B cell (primary cell): ENCODE measurements at regions of chr4 and their contacts with region 1.

Region 1: DNA sequence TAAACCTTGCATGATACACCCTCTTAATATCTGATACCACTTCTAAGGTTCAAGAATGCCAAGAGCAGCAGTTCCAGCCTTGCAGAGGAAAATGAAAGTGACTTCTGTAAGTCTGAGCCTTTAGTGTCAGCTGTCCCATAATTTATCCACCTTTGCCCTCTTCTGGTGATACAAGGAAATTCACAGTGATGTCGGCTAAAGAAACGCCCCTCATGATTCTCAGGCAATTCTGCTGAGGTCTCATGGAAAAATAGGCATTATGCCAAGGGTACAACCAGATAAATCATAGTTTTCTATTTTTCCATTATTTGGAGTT is 172.2 kb upstream of the CXCL13 start:
- DNase-seq: peak; percentile 52
- ATAC-seq: peak; percentile 45
- H3K4me3 ChIP-seq: no peak overlapping the region
- H3K4me3 Mint-ChIP-seq: no peak overlapping the region
- H3K27ac ChIP-seq: no peak overlapping the region
- H3K27ac Mint-ChIP-seq: no peak overlapping the region
- H3K4me1 ChIP-seq: peaks cover 0 to 3% of the 10 kb centered on the region in 2 donors
- H3K4me1 Mint-ChIP-seq: peaks cover 6% of the 10 kb centered on the region
- H3K27me3 ChIP-seq: no peaks in the 10 kb centered on the region
- H3K27me3 Mint-ChIP-seq: no peaks in the 10 kb centered on the region
- CTCF ChIP-seq: peak; percentile 50

Region 2: DNA sequence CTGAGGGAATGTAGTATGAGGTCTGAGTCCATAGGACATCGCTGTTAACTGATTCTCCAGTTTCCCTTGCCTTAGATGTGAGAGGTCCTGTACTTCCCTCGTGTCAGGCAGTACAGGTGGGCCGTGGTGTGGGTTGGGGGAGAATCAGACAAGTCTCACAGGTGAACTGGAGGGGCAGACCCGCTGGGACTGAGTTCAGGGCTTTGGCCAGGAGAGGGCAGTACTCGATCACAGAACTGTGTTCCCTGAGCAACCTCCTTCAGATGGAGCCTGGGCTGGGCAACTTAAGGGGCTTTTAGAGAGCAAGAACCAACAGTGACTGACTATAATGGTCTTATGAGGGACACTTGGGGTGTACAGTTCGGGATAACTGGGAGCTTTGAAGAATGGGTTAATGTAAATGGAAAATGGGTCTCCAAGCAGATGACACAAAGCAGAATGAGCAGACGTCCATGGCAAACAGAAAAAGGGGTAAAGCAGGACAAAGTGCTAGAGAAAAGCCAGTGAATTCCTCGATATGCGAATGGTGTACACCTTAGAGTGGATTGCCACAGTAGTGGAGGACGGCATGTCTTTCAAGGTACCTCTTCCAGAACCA is 192.8 kb before region 1 on chr4:
- CTCF ChIA-PET with region 1: interaction called, 5 read pairs
- POLR2A ChIA-PET with region 1: no interaction called
- intact Hi-C with region 1: loop called (anchors 2 kb)
- DNase-seq: peak; percentile 56
- ATAC-seq: peak; percentile 70
- H3K4me3 ChIP-seq: no peak overlapping the region
- H3K4me3 Mint-ChIP-seq: no peak overlapping the region
- H3K27ac ChIP-seq: no peak overlapping the region
- H3K27ac Mint-ChIP-seq: no peak overlapping the region
- H3K4me1 ChIP-seq: no peaks in the 10 kb centered on the region
- H3K4me1 Mint-ChIP-seq: no peaks in the 10 kb centered on the region
- H3K27me3 ChIP-seq: no peaks in the 10 kb centered on the region
- H3K27me3 Mint-ChIP-seq: peaks cover 11% of the 10 kb centered on the region
- CTCF ChIP-seq: peak; percentile 76

Region 3: DNA sequence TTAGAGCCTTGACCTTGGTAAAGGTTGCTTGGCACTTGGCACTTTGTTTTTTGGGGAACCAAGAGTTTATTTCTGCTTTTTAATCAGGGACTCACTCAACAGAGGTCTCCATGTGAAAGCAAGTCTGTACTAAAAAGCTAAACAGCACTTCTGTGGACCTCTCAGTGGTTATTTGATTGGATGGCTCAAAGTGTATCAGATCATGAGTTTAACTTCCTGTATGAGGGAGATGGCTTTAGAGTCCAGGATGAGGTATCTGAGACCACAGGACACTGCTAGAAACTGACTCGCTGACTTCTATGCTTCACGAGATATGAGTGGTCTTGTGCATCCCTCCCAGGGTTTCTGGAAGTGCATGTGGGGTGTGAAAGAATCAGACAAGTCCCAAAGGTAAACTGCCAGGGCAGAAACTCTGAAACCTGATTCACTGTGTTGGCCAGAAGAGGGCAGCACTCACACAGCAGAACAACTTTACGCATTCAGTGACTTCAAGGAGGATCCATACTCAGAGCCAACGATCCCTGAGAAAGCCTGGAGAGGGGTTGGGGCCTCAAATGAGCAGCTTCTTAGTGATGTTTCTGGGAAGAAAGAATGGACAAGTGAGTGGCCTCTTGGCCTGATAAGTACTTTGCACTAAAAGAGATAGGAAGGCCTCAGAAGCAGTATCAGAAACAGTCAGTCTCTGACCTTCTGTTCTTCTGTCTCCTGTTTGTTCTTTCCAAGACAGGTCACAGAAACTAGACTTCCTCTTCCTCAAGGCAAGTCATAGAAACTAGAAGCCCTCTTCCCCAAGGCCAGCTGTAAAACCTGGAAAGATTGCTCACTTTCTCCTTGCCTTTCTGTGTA is 48.0 kb before region 1 on chr4:
- CTCF ChIA-PET with region 1: interaction called, 7 read pairs
- POLR2A ChIA-PET with region 1: no interaction called
- intact Hi-C with region 1: loop called (anchors 1 kb)
- DNase-seq: peak; percentile 64
- ATAC-seq: no peak
- H3K4me3 ChIP-seq: no peak overlapping the region
- H3K4me3 Mint-ChIP-seq: no peak overlapping the region
- H3K27ac ChIP-seq: no peak overlapping the region
- H3K27ac Mint-ChIP-seq: no peak overlapping the region
- H3K4me1 ChIP-seq: no peaks in the 10 kb centered on the region
- H3K4me1 Mint-ChIP-seq: peaks cover 3% of the 10 kb centered on the region
- H3K27me3 ChIP-seq: peaks cover 0 to 2% (median 0%) of the 10 kb centered on the region in 4 experiments
- H3K27me3 Mint-ChIP-seq: no peaks in the 10 kb centered on the region
- CTCF ChIP-seq: peak; percentile 84

Region 4: DNA sequence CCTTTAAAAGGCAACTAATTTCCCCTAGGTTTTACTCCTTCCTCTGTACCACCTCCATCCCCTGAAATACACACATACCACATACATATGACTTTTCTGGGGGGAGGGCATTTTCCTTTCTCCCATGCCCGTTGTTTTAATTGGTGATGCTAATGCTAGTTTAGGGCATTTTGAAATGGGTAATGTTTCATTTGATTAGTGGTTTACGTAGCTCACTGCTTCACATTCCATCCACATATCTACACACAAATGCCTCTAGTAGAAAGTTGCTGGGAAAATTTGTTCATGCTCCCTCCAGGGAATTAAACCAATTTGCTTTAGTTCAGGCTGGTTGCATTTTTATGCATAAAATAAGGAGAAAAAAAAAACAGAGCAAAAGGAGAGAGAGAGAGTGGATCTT is 855.0 kb after region 1 on chr4:
- CTCF ChIA-PET with region 1: no interaction called
- POLR2A ChIA-PET with region 1: no interaction called
- intact Hi-C with region 1: no loop called
- DNase-seq: no peak
- ATAC-seq: no peak
- H3K4me3 ChIP-seq: no peak overlapping the region
- H3K4me3 Mint-ChIP-seq: no peak overlapping the region
- H3K27ac ChIP-seq: no peak overlapping the region
- H3K27ac Mint-ChIP-seq: no peak overlapping the region
- H3K4me1 ChIP-seq: no peaks in the 10 kb centered on the region
- H3K4me1 Mint-ChIP-seq: no peaks in the 10 kb centered on the region
- H3K27me3 ChIP-seq: no peaks in the 10 kb centered on the region
- H3K27me3 Mint-ChIP-seq: peaks cover 5% of the 10 kb centered on the region
- CTCF ChIP-seq: no peak